ENCODE measurements at regions of chr16 and their contacts with region 1.

Region 1: GRCh38 chr16:59192551-59193199 is 458.6 kb upstream of the GOT2 start:
- DNase-seq: peak in 1 of 2 experiments; percentile 86
- H3K4me3 ChIP-seq: no peak overlapping the region
- H3K27ac ChIP-seq: no peak overlapping the region
- H3K4me1 ChIP-seq: peaks cover 0 to 2% (median 0%) of the 10 kb centered on the region in 4 experiments; a peak in 1 of 7 replicates
- H3K27me3 ChIP-seq: no peaks in the 10 kb centered on the region
- CTCF ChIP-seq: peak in 2 of 3 experiments; percentile 56 to 84; a peak in 3 of 4 replicates
- EP300 ChIP-seq: no peak
- POLR2A ChIP-seq: no peak
- RAD21 ChIP-seq: peak; percentile 63 to 76

Region 2: DNA sequence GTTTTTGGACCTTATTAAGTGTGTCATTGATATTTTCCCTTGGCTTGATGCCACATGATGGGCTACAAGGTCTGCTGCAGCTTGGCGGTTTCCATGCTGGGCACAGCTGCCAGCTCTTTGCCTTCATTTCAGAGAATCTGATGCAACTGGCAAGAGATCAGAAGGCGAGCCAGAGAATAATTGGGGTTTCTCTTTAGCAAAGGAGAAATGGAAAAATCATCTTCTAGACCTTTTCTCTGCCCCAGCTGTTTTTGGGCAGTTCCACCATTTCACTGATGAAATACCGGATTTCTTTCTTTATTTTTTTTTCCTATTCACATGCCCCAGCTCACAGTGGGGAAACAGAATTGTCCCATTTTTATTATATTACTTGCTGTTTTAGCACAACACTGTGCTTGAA is 19.3 kb before region 1 on chr16:
- CTCF ChIA-PET with region 1: interaction called, 11 read pairs
- POLR2A ChIA-PET with region 1: interaction called, 3 read pairs
- DNase-seq: no peak
- H3K4me3 ChIP-seq: no peak overlapping the region
- H3K27ac ChIP-seq: no peak overlapping the region
- H3K4me1 ChIP-seq: peaks cover 0 to 13% (median 2%) of the 10 kb centered on the region in 4 experiments; a peak in 3 of 7 replicates
- H3K27me3 ChIP-seq: no peaks in the 10 kb centered on the region
- CTCF ChIP-seq: no peak
- EP300 ChIP-seq: no peak
- POLR2A ChIP-seq: no peak
- RAD21 ChIP-seq: no peak

Region 3: DNA sequence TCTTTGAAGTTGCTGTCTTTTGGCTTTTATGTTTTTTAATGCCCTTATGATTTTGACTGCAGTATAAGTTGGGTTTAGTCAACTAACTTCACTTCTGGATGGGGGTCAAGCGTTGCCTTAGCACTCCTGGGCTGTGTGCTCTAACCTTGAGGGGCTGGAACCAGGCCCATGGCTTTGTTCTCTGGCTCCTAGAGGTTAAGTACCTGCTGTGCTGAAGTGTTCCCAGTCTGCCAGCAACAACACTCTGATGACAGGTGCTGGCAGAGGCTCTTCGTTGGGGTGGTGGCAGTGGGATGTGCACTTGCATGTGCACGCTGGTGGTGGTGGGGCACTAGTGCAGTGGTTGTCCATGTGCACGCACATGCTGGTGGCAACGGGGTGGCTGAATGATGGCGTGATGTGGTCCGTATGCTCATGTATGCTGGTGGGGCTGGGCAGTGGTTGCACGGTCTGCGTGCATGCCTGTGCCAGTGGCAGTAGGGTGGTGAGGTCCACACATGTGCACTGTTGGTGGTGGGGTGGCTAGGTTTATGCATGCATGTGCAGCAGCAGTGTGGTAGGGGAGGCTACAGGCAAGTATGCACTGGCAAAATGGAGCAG is 10.8 kb before region 1 on chr16:
- CTCF ChIA-PET with region 1: interaction called, 16 read pairs
- POLR2A ChIA-PET with region 1: no interaction called
- DNase-seq: no peak
- H3K4me3 ChIP-seq: no peak overlapping the region
- H3K27ac ChIP-seq: no peak overlapping the region
- H3K4me1 ChIP-seq: peaks cover 0 to 3% (median under 1%) of the 10 kb centered on the region in 4 experiments; a peak in 2 of 7 replicates
- H3K27me3 ChIP-seq: no peaks in the 10 kb centered on the region
- CTCF ChIP-seq: no peak
- EP300 ChIP-seq: no peak
- POLR2A ChIP-seq: no peak
- RAD21 ChIP-seq: no peak

Region 4: DNA sequence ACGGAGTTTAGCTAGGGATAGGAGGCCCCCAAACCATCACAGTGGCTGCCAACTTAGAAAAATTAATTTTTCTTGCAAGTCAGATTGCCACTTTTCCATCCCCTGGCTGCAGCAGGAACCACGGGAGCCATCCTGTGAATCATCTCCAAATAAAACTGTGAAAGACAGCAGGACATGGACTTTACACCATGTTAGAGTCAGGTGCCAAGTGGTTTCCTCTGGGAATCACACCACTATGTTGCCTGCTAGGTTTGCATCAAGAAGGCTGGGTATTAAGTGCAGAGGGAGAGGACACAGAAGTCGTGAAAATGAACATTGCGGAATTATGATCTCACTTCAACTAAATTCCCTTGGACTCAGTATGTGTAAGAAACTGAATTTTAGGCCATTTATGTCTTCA is 12.7 kb after region 1 on chr16:
- CTCF ChIA-PET with region 1: interaction called, 14 read pairs
- POLR2A ChIA-PET with region 1: no interaction called
- DNase-seq: no peak
- H3K4me3 ChIP-seq: no peak overlapping the region
- H3K27ac ChIP-seq: no peak overlapping the region
- H3K4me1 ChIP-seq: peaks cover 0 to 3% (median 0%) of the 10 kb centered on the region in 4 experiments; a peak in 2 of 7 replicates
- H3K27me3 ChIP-seq: no peaks in the 10 kb centered on the region
- CTCF ChIP-seq: no peak
- EP300 ChIP-seq: no peak
- POLR2A ChIP-seq: no peak
- RAD21 ChIP-seq: no peak

Region 5: DNA sequence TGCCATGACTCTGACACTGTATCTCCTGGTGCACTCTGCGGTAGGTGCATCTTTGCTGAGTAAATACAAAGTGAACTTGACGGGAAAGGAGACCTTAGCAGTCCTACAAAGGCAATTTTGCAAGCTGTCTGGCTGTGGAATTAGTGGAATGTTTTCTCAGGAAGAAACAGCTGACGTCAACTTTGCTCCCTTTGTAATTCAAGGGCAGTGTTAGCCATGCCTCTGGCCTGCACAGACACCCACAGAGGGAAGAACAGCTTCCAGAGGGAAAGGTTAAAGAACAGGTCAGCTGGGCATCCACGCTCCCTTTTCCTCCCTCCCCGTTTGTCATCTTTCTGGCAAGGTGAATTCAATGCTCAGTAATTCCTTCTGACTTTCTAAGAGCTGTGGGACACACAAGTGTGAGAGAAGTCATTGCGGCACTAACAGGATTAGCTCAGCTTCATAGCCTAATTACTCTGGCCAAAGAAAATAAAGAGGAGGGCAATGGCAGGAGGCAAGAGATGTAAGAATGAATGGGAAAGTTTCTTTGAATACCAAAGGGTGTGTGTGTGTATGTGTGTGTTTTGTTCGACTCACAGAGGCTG is 18.4 kb after region 1 on chr16:
- CTCF ChIA-PET with region 1: interaction called, 10 read pairs
- POLR2A ChIA-PET with region 1: no interaction called
- DNase-seq: peak in 1 of 2 experiments; percentile 51
- H3K4me3 ChIP-seq: no peak overlapping the region; a peak in 1 of 8 replicates
- H3K27ac ChIP-seq: no peak overlapping the region
- H3K4me1 ChIP-seq: peaks cover 0 to 11% (median 6%) of the 10 kb centered on the region in 4 experiments; a peak in 5 of 7 replicates
- H3K27me3 ChIP-seq: no peaks in the 10 kb centered on the region
- CTCF ChIP-seq: no peak
- EP300 ChIP-seq: no peak
- POLR2A ChIP-seq: no peak
- RAD21 ChIP-seq: no peak

Region 6: DNA sequence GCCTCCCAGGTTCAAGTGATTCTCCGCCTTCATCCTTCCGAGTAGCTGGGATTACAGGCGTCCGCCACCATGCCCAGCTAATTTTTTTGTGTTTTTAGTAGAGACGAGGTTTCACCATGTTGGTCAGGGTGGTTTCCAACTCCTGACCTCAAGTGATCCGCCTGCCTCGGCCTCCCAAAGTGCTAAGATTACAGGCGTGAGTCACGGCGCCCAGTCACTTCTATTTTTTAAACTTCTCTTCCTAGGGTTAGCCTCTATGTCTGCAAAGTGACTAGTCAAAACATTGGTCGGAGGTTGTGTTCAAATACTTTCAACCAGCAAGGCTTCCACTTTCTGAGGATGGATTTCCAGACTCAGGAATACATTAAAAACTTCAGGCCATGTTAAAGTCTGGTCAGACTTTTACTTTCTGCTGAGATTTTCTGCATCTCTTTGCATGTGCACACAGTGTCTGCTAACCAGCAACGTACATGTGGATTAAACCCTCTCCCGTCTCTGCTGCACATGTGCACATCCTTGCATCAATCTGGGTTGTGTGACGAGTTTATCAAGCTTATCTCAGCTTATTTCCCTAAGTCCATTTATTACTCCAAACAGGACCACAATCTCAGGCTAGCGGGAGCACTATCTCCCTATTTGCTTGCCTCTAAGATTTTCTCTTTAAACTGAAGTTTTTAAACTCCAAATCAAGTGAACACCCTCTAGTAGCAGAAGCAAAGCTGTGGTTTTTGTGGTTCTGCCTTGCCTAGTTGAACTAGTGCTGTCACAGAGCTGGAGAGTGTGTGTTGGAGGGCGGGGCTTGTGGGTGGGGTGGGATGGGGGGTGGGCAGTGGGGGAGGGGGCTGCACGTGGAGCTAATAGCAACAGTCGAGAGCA is 66.6 kb after region 1 on chr16:
- CTCF ChIA-PET with region 1: no interaction called
- POLR2A ChIA-PET with region 1: no interaction called
- DNase-seq: no peak
- H3K4me3 ChIP-seq: no peak overlapping the region
- H3K27ac ChIP-seq: no peak overlapping the region
- H3K4me1 ChIP-seq: no peaks in the 10 kb centered on the region
- H3K27me3 ChIP-seq: no peaks in the 10 kb centered on the region
- CTCF ChIP-seq: no peak
- EP300 ChIP-seq: no peak
- POLR2A ChIP-seq: no peak
- RAD21 ChIP-seq: no peak

Measured in H1 (cell line).